Thyroid gland (tissue), 4 donors: ENCODE measurements at regions of chr10 and their contacts with region 1.

Region 1: GRCh38 chr10:4849555-4850242 is 23.7 kb downstream of the AKR1E2 start:
- DNase-seq: peak; percentile 94 to 96
- H3K4me3 ChIP-seq: no peak overlapping the region
- H3K27ac ChIP-seq: peak overlapping the region; percentile 14 to 89 (median 73)
- H3K4me1 ChIP-seq: peaks cover 24 to 30% of the 10 kb centered on the region in 2 donors
- H3K27me3 ChIP-seq: no peaks in the 10 kb centered on the region
- CTCF ChIP-seq: peak; percentile 66 to 100 (median 96)
- POLR2A ChIP-seq: peak in 1 of 2 donors; percentile 57

Region 2: GRCh38 chr10:4981722-4982471 is 132.2 kb after region 1 on chr10:
- intact Hi-C with region 1: loop called (anchors 10 kb)
- DNase-seq: peak; percentile 75 to 78
- H3K4me3 ChIP-seq: no peak overlapping the region
- H3K27ac ChIP-seq: peak overlapping the region; percentile 76 to 84 (median 79)
- H3K4me1 ChIP-seq: peaks cover 15 to 31% of the 10 kb centered on the region in 2 donors
- H3K27me3 ChIP-seq: no peaks in the 10 kb centered on the region
- CTCF ChIP-seq: peak; percentile 28 to 89 (median 72)
- POLR2A ChIP-seq: peak in 1 of 2 donors; percentile 51

Region 3: GRCh38 chr10:5018134-5018533 is 168.4 kb after region 1 on chr10:
- intact Hi-C with region 1: no loop called
- DNase-seq: no peak
- H3K4me3 ChIP-seq: no peak overlapping the region
- H3K27ac ChIP-seq: peak overlapping the region in 2 of 3 donors; percentile 80 to 97
- H3K4me1 ChIP-seq: peaks cover 39 to 49% of the 10 kb centered on the region in 2 donors
- H3K27me3 ChIP-seq: no peaks in the 10 kb centered on the region
- CTCF ChIP-seq: no peak
- POLR2A ChIP-seq: no peak

Region 4: GRCh38 chr10:5283305-5284158 is 433.8 kb after region 1 on chr10:
- intact Hi-C with region 1: loop called (anchors 10 kb)
- DNase-seq: peak; percentile 64 to 78
- H3K4me3 ChIP-seq: no peak overlapping the region
- H3K27ac ChIP-seq: no peak overlapping the region
- H3K4me1 ChIP-seq: no peaks in the 10 kb centered on the region
- H3K27me3 ChIP-seq: no peaks in the 10 kb centered on the region
- CTCF ChIP-seq: peak in 5 of 6 experiments; percentile 42 to 82 (median 76)
- POLR2A ChIP-seq: no peak